Sigmoid colon (tissue), 7 donors: ENCODE measurements at regions of chr20 and their contacts with region 1.

Region 1: GRCh38 chr20:8389381-8390036 is 257.4 kb downstream of the PLCB1 start:
- DNase-seq: no peak
- H3K4me3 ChIP-seq: no peak overlapping the region
- H3K27ac ChIP-seq: peak overlapping the region in 1 of 4 donors; percentile 2
- H3K4me1 ChIP-seq: peaks cover 0 to 34% (median 32%) of the 10 kb centered on the region in 4 donors
- H3K27me3 ChIP-seq: no peaks in the 10 kb centered on the region
- CTCF ChIP-seq: peak; percentile 25 to 60 (median 42)
- EP300 ChIP-seq: no peak
- POLR2A ChIP-seq: no peak

Region 2: DNA sequence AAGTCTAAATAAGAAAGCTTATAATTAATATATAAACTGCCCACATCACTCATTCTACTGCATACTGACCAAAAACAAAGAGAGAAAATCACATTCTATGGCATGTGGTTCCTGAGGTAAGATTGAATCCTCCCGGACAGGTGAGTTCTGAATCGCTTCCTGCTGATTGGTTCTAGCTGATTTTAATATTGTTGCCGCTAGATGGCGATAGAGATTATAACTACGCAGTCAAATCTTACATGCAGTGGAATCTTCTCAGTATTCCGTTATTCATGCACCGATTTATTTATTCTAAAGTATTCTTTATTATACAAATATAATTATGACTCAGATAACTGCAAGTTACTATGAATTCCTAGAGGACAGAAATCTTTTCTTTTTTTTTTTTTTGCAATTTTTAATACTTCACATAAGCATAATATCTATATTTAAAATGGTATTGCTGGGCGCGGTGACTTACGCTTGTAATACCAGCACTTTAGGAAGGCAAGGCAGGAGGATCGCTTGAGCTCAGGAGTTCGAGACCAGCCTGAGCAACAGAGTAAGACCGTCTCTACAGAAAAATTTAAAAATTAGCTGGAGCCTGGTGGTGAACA is 345.7 kb before region 1 on chr20:
- intact Hi-C with region 1: loop called (anchors 1 kb)
- DNase-seq: no peak
- H3K4me3 ChIP-seq: no peak overlapping the region
- H3K27ac ChIP-seq: no peak overlapping the region
- H3K4me1 ChIP-seq: no peaks in the 10 kb centered on the region
- H3K27me3 ChIP-seq: no peaks in the 10 kb centered on the region
- CTCF ChIP-seq: peak; percentile 60 to 80 (median 70)
- EP300 ChIP-seq: no peak
- POLR2A ChIP-seq: no peak